Aorta (tissue), 5 donors: ENCODE measurements at regions of chr2 and their contacts with region 1.

Region 1: DNA sequence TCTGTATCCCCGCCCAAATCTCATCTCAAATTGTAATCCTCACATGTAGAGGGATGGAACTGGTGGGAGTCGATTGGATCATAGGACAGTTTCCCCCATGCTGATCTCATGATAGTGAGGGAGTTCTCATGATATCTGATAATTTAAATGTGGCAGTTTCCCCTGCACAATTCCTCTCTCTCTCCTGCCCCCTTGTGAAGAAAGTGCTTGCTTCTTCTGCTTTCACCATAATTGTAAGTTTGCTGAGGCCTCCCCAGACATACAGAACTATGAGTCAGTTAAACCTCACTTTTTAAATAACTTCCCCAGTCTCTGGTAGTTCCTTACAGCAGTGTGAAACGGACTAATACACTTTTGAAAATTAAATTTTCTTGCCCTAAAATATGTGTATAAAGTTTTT is 12.3 kb upstream of the KCNJ3 start:
- DNase-seq: no peak
- ATAC-seq: no peak
- H3K4me3 ChIP-seq: no peak overlapping the region
- H3K27ac ChIP-seq: no peak overlapping the region
- H3K4me1 ChIP-seq: no peaks in the 10 kb centered on the region
- H3K27me3 ChIP-seq: no peaks in the 10 kb centered on the region

Region 2: DNA sequence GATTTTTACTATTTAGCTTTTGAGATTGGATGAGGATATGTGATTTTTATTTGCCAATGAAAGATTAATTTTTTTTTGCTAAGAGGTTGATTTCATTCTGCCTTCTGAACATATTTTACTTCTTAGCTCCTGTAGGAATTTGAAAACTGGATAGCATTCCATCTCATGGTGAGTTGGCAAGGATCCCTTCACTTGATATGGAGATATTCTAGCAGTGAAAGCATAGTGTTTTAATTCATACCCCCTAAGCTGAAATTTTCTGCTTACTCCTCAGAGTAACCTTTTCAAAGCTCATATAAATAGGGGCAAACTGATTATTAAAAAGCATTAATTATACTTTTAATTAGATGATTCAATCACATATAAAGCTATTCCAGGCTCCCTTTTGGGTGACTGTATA is 48.7 kb before region 1 on chr2:
- intact Hi-C with region 1: loop called in 1 of 2 experiments (anchors 5 kb)
- DNase-seq: no peak
- ATAC-seq: no peak
- H3K4me3 ChIP-seq: no peak overlapping the region
- H3K27ac ChIP-seq: peak overlapping the region in 1 of 2 donors; percentile 28
- H3K4me1 ChIP-seq: peaks cover 0 to 8% of the 10 kb centered on the region in 2 donors
- H3K27me3 ChIP-seq: no peaks in the 10 kb centered on the region